Activated T-helper 1 cell treated with anti-CD3 and anti-CD28 coated beads, Interleukin-12 subunit alpha, Interleukin-12 subunit beta, Interleukin-2, Interleukin-4 antibody, amounts not matched to agents 30 ng/mL and 10 ng/mL and 1 ng/mL, durations not matched to agents 14 hours and 24 hours and 36 hours (primary cell): ENCODE measurements at regions of chr1 and their contacts with region 1.

Region 1: GRCh38 chr1:15323351-15323988 is 76.4 kb downstream of the FHAD1 start:
- DNase-seq: peak; percentile 61
- H3K4me3 Mint-ChIP-seq: no peak overlapping the region
- H3K27ac Mint-ChIP-seq: no peak overlapping the region
- H3K4me1 Mint-ChIP-seq: peaks cover 6% of the 10 kb centered on the region
- H3K27me3 Mint-ChIP-seq: peaks cover 29% of the 10 kb centered on the region

Region 2: GRCh38 chr1:15364740-15365139 is 41.3 kb after region 1 on chr1:
- intact Hi-C with region 1: loop called (anchors 2 kb)
- DNase-seq: no peak
- H3K4me3 Mint-ChIP-seq: no peak overlapping the region
- H3K27ac Mint-ChIP-seq: no peak overlapping the region
- H3K4me1 Mint-ChIP-seq: no peaks in the 10 kb centered on the region
- H3K27me3 Mint-ChIP-seq: peaks cover 17% of the 10 kb centered on the region

Region 3: GRCh38 chr1:15409388-15410222 is 86.1 kb after region 1 on chr1 and contains the start of gene EFHD2:
- intact Hi-C with region 1: loop called (anchors 2 kb)
- DNase-seq: peak; percentile 83
- H3K4me3 Mint-ChIP-seq: peak within 1 kb of the TSS; percentile 96
- H3K27ac Mint-ChIP-seq: peak within 1 kb of the TSS; percentile 94
- H3K4me1 Mint-ChIP-seq: peaks cover 47% of the 10 kb centered on the region
- H3K27me3 Mint-ChIP-seq: peaks cover 29% of the 10 kb centered on the region
- total RNA-seq, gene EFHD2: 100 and 101 TPM in 2 replicates

Region 4: DNA sequence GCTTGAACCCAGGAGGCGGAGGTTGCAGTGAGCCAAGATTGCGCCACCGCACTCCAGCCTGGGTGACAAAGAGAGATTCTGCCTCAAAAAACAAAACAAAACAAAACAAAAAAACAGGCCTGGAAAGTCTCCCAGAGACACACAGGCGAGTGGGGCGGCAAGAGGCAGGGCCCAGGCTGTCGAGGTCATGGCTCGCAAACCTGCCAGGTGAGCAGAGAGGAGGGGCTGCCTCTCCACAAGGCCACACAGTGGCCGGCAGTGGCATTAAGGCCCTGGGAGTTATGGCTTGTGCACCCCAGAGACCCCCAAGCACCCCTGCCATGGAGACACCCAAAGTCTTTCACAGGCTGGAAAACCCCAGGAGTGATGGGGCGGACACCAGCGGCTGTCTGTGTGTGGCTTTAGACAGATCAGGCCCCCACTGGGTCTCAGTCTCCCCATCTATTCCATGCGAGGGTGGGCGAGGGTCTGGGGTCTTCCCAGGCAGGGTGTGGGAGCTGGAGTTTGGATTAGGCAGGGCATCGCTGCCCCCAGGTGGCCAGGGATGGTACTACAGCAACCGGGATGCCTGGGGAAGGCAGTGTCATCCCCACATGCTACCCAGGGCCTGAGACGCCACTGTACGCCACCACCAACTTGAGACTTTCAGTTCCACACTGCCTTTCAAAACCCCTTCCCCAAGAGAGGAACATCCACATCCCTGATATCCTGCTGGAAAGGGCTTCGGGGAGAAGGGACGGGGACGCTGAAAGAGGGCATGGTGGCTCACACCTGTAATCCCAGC is 107.5 kb after region 1 on chr1:
- intact Hi-C with region 1: loop called (anchors 1 kb)
- DNase-seq: peak; percentile 47
- H3K4me3 Mint-ChIP-seq: no peak overlapping the region
- H3K27ac Mint-ChIP-seq: no peak overlapping the region
- H3K4me1 Mint-ChIP-seq: peaks cover 13% of the 10 kb centered on the region
- H3K27me3 Mint-ChIP-seq: no peaks in the 10 kb centered on the region

Region 5: GRCh38 chr1:15501208-15502032 is 177.9 kb after region 1 on chr1:
- intact Hi-C with region 1: loop called (anchors 1 kb)
- DNase-seq: peak; percentile 25
- H3K4me3 Mint-ChIP-seq: no peak overlapping the region
- H3K27ac Mint-ChIP-seq: no peak overlapping the region
- H3K4me1 Mint-ChIP-seq: no peaks in the 10 kb centered on the region
- H3K27me3 Mint-ChIP-seq: no peaks in the 10 kb centered on the region